ENCODE measurements at regions of chr12 and their contacts with region 1.

Region 1: DNA sequence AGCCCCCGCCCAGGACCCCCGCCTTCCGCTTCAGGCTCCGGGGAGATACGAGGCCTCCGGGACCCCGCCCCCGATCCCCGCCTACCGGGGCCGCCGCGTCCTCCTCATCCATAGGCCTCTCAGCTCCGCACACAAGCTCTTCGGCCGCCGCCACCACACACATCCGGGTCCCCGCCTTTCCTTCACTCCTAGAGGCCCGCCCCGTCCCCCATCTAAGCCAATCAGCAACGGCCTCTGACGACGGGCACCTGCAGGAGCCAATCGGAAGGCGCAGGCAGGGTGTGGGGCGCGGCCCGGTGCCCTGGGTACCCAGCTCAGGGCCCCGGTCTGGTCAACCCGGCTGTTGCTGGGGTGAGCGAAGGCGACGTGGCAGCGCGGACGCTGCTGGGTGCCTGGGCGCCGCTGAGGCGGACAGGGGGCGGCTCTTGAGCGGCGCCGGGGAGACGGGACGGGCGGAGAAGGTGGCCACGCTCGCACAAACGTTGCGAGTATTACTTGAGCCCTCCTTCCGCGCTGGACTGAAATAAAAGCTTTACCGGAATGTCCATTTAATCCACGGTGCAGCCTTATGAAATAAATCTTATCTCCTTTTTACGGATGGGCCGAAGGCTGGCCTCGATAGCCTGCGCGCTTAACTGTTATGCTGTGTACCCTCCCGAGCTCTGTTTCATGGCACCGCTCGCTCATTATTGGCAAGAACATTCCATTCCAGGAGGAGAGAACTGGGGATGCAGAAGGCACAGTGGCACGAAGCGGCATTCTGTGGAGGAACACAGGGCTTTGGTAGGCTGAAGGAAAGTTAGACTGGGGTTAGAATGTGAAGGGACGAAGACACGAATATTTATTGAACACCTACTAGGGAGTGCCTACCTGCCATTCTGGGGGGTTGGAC is at the start of gene SPRYD3:
- DNase-seq: peak; percentile 99

Region 2: GRCh38 chr12:53054112-53054833 is 25.2 kb before region 1 on chr12:
- CTCF ChIA-PET with region 1: no interaction called
- POLR2A ChIA-PET with region 1: interaction called, 12 read pairs
- DNase-seq: peak; percentile 95

Region 3: GRCh38 chr12:53065975-53066931 is 13.2 kb before region 1 on chr12:
- CTCF ChIA-PET with region 1: interaction called, 18 read pairs
- POLR2A ChIA-PET with region 1: interaction called, 16 read pairs
- DNase-seq: peak; percentile 87

Region 4: GRCh38 chr12:53098982-53099651 is 19.6 kb after region 1 on chr12:
- CTCF ChIA-PET with region 1: interaction called, 9 read pairs
- POLR2A ChIA-PET with region 1: interaction called, 23 read pairs
- DNase-seq: peak; percentile 85

Region 5: DNA sequence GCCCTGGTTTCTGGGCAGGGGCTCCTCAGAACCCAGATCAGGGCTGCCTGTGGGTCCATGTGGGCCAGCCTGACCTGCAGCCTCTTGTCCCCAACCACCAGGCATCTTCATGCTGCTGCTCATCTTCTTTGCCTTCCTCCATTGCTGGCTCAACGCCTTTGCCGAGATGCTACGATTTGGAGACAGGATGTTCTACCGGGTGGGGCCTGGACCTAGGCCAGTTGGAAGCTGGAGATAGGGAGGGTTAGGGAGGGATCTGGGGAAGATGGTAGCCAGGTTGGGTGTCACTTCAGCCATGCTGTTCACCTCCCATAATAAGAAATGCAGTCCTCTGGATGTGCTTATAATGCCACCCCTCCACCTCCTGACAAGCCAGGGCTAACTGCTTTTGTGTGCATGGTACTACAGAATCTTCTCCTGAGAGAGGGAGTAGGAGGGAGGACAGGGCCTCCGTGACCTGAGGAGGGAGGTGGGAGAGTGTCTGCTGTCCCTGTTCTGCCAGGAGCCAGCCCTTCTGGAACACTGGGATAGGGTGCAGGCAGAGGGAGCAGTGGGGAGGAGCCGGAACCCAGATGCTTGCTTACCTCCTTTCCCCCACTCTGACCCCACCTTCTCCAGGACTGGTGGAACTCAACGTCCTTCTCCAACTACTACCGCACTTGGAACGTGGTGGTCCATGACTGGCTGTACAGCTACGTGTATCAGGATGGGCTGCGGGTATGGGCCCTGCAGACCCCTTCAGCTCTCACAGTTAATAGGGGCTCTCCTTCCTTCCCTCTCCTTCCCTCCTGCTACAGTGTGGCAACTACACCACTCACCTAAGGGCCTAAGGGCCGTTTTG is 41.4 kb after region 1 on chr12:
- CTCF ChIA-PET with region 1: no interaction called
- POLR2A ChIA-PET with region 1: no interaction called
- DNase-seq: no peak

Region 6: GRCh38 chr12:53476769-53477209 is 397.3 kb after region 1 on chr12:
- CTCF ChIA-PET with region 1: no interaction called
- POLR2A ChIA-PET with region 1: no interaction called
- DNase-seq: peak; percentile 34

Measured in HEK293T (cell line).